ENCODE measurements at regions of chr15 and their contacts with region 1.

Region 1: DNA sequence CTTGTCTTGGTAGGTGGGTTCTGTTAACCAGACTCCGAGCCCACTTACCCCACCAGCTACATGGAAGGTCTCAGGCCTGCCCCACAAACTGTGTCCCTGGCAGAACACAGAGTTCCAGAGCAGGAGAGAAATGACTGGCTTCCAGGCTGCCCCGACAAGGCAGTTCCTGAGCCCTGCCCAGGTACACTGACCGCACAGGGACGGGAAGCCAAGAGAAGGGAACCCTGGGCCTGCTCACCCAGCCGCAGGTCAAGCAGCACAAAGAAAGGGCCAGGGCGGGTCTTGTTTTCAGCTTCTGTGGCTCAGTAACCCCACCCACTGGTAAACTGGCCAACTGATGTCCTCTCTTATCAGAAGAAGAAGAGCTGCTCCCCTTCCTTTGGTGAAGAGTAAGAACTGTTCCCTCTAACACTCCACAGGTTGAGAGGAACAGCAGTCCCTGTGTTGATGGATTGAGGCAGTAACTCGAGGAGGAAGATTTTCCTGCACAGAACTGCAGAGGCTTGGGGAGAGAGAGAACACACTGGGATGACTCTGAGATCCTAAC is 68.4 kb downstream of the CRTC3 start:
- DNase-seq: peak; percentile 24
- ATAC-seq: no peak
- H3K4me3 Mint-ChIP-seq: peak overlapping the region; percentile 39
- H3K27ac Mint-ChIP-seq: peak overlapping the region; percentile 98
- H3K4me1 Mint-ChIP-seq: peaks cover 80% of the 10 kb centered on the region
- H3K27me3 Mint-ChIP-seq: no peaks in the 10 kb centered on the region
- CTCF ChIP-seq: no peak

Region 2: GRCh38 chr15:90362936-90363212 is 235.2 kb before region 1 on chr15:
- CTCF ChIA-PET with region 1: no interaction called
- POLR2A ChIA-PET with region 1: no interaction called
- intact Hi-C with region 1: no loop called
- DNase-seq: no peak
- ATAC-seq: no peak
- H3K4me3 Mint-ChIP-seq: no peak overlapping the region
- H3K27ac Mint-ChIP-seq: no peak overlapping the region
- H3K4me1 Mint-ChIP-seq: peaks cover 8% of the 10 kb centered on the region
- H3K27me3 Mint-ChIP-seq: no peaks in the 10 kb centered on the region
- CTCF ChIP-seq: no peak

Region 3: DNA sequence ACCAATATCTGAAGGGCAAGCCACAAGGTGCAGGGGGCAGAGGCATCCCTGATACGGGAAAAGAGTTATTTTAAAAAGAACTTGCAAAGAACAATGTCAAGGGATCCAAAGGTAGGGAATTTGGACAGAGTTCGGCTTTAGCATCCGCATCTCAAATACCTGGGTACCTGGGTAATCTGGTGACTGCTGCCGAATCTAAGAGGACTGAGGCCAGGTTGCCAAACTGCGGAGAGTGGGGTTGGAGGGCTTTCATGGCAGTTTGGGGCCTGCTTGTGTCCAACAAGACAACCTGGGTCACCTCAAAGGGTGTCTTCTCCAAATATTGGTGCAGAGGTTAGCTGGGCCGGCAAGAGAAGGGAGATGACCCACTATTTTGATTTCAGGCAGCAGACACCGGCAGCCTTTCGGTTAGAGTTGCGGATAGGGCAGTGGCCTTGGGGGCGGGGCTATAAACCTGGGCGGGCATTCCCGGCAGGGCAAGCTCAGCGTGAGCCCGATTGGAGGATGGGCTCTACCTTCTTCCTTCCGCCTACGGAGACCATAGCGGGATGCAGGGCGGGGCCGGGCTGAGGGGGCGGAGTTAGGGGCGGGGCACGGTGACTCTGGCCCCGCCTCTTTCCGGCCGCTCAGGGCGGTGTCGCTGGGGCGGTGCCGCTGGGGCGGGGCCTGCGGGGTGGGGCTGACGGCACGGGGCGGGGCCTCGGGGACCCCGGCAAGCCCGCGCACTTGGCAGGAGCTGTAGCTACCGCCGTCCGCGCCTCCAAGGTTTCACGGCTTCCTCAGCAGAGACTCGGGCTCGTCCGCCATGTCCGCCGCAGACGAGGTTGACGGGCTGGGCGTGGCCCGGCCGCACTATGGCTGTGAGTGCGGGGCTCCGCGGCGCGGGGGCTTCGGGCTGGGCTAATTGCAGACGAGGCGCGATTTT is 210.3 kb before region 1 on chr15 and contains the start of gene IQGAP1:
- CTCF ChIA-PET with region 1: no interaction called
- POLR2A ChIA-PET with region 1: interaction called, 7 read pairs
- intact Hi-C with region 1: loop called (anchors 10 kb)
- DNase-seq: peak; percentile 88
- ATAC-seq: peak; percentile 85
- H3K4me3 Mint-ChIP-seq: peak within 1 kb of the TSS; percentile 93
- H3K27ac Mint-ChIP-seq: peak within 1 kb of the TSS; percentile 95
- H3K4me1 Mint-ChIP-seq: peaks cover 47% of the 10 kb centered on the region
- H3K27me3 Mint-ChIP-seq: no peaks in the 10 kb centered on the region
- CTCF ChIP-seq: no peak
- total RNA-seq, gene IQGAP1: 187 and 227 TPM in 2 replicates

Region 4: DNA sequence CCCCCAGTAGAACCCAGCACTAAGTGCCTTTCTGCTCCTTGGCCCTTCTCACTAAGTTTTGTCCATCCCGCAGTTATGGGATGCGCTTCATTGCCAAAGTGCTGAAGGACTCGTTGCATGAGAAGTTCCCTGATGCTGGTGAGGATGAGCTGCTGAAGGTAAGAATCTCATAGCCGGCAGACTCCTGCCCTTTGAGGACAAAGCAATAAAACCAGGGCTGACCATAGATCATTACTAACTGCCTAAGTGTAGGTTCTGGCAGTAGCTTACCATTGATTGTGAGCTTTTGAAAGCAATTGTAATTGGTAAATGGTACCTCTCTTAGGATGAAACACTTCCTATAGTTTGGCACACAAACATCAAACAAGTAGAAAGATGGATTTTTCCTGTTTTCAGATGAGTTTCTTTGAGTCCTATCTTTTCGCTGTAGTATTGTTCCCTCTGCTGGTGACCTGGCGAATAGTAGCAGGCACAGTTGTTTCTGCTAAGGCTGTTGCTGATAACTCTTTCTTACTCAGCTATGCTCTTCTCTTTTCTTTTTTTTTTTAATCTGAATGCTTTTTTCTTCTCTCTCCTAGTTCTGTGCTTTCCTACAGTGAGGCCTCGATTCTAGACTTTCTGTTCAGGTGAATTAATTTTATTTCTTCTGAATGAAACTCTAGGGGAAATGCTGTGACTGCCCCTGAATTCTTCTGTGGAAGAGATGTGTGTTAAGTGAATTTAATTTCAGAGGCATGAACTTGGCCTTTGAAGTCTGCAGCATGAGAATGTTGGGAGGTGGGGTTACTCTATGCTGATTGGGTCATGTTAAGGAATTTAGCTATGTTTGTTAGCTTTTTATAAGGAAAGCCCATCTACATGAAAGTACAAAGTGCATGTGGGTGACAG is 115.7 kb before region 1 on chr15:
- CTCF ChIA-PET with region 1: interaction called, 10 read pairs
- POLR2A ChIA-PET with region 1: interaction called, 3 read pairs
- intact Hi-C with region 1: no loop called
- DNase-seq: no peak
- ATAC-seq: no peak
- H3K4me3 Mint-ChIP-seq: no peak overlapping the region
- H3K27ac Mint-ChIP-seq: no peak overlapping the region
- H3K4me1 Mint-ChIP-seq: peaks cover 48% of the 10 kb centered on the region
- H3K27me3 Mint-ChIP-seq: no peaks in the 10 kb centered on the region
- CTCF ChIP-seq: no peak

Region 5: GRCh38 chr15:90497912-90498311 is 100.2 kb before region 1 on chr15:
- CTCF ChIA-PET with region 1: interaction called, 10 read pairs
- POLR2A ChIA-PET with region 1: no interaction called
- intact Hi-C with region 1: loop called (anchors 5 kb)
- DNase-seq: no peak
- ATAC-seq: no peak
- H3K4me3 Mint-ChIP-seq: no peak overlapping the region
- H3K27ac Mint-ChIP-seq: no peak overlapping the region
- H3K4me1 Mint-ChIP-seq: no peaks in the 10 kb centered on the region
- H3K27me3 Mint-ChIP-seq: no peaks in the 10 kb centered on the region
- CTCF ChIP-seq: no peak

Region 6: DNA sequence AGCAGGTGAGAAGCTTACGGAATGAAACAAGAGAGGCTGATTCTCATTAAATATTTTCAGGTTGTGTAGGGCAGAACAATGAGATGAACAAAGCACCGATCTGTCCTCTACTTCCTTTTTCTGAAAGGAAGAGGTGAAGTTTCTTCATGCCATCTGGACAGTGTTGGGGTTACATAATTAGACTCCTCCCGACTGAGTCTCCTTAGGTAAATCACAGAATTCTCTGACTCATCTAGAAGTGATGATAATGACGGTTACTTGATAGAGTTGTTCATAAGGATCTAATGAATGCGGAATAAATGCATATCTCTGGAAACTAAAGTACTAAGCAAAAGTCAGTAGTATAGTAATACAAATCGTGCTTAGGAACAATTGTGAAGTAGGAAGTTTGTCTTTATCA is 47.2 kb before region 1 on chr15:
- CTCF ChIA-PET with region 1: no interaction called
- POLR2A ChIA-PET with region 1: interaction called, 9 read pairs
- intact Hi-C with region 1: loop called (anchors 1 kb)
- DNase-seq: no peak
- ATAC-seq: peak; percentile 76
- H3K4me3 Mint-ChIP-seq: peak overlapping the region; percentile 66
- H3K27ac Mint-ChIP-seq: peak overlapping the region; percentile 85
- H3K4me1 Mint-ChIP-seq: peaks cover 65% of the 10 kb centered on the region
- H3K27me3 Mint-ChIP-seq: no peaks in the 10 kb centered on the region
- CTCF ChIP-seq: no peak

Region 7: GRCh38 chr15:90564051-90564450 is 34.1 kb before region 1 on chr15:
- CTCF ChIA-PET with region 1: interaction called, 7 read pairs
- POLR2A ChIA-PET with region 1: interaction called, 12 read pairs
- intact Hi-C with region 1: loop called (anchors 1 kb)
- DNase-seq: no peak
- ATAC-seq: peak; percentile 75
- H3K4me3 Mint-ChIP-seq: peak overlapping the region; percentile 58
- H3K27ac Mint-ChIP-seq: peak overlapping the region; percentile 88
- H3K4me1 Mint-ChIP-seq: peaks cover 88% of the 10 kb centered on the region
- H3K27me3 Mint-ChIP-seq: no peaks in the 10 kb centered on the region
- CTCF ChIP-seq: no peak

Region 8: GRCh38 chr15:90665288-90666134 is 67.4 kb after region 1 on chr15:
- CTCF ChIA-PET with region 1: no interaction called
- POLR2A ChIA-PET with region 1: no interaction called
- intact Hi-C with region 1: loop called (anchors 2 kb)
- DNase-seq: peak; percentile 62
- ATAC-seq: peak; percentile 90
- H3K4me3 Mint-ChIP-seq: peak overlapping the region; percentile 85
- H3K27ac Mint-ChIP-seq: peak overlapping the region; percentile 84
- H3K4me1 Mint-ChIP-seq: peaks cover 55% of the 10 kb centered on the region
- H3K27me3 Mint-ChIP-seq: peaks cover 13% of the 10 kb centered on the region
- CTCF ChIP-seq: no peak

Measured in activated B cell treated with CpG ODN at 0.5 μM for 24 hours (primary cell).